IMR-90 (cell line): ENCODE measurements at regions of chr14 and their contacts with region 1.

Region 1: DNA sequence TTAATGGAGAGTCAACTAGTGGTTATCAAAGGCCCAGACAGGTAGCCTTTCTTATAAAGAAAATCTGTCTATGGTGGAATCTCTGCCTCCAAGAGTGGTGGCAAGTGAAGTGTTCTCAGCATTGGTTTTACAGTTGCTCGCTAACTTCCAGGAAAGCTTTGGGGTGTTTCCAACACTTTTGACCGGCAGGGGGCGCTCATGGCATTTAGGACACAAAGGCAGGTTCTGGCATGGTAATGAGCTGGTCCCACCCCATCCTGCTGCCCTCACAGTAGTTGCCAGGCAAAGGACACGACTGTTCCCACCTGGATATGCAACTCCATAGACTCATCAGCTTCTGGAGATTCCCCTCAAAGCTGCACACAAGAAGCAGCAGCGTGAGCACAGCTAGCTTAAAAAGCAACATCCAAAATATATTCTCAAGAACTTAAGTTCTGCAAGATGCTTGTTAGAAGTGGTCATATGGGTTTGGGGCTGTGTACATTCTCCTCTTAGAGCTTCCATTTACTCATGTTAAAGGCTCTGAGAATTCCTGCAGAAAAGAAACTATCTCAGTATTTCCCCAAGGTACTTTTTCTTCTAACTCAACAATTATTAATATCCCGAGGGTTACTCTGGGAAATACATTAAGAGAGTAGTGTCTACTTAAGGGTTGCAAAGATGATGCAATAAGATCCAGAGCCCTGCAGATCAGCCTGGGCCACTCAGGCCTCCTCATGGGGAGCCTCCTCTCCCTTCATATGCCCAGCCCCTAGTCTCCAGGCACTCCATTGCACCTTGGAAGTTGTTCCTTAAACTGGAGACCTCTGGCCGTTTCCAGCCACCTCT is 14.8 kb downstream of the PROX2 start:
- DNase-seq: peak; percentile 80
- ATAC-seq: peak; percentile 89
- H3K4me3 ChIP-seq: no peak overlapping the region
- H3K27ac ChIP-seq: no peak overlapping the region
- H3K4me1 ChIP-seq: peaks cover 2% of the 10 kb centered on the region; the same call in 1 of the 2 replicates
- H3K27me3 ChIP-seq: 0 out of 2 replicates have a peak, but pooled peaks cover under 1% of the 10 kb centered on the region
- CTCF ChIP-seq: peak; percentile 89
- POLR2A ChIP-seq: no peak
- RAD21 ChIP-seq: peak; percentile 84

Region 2: DNA sequence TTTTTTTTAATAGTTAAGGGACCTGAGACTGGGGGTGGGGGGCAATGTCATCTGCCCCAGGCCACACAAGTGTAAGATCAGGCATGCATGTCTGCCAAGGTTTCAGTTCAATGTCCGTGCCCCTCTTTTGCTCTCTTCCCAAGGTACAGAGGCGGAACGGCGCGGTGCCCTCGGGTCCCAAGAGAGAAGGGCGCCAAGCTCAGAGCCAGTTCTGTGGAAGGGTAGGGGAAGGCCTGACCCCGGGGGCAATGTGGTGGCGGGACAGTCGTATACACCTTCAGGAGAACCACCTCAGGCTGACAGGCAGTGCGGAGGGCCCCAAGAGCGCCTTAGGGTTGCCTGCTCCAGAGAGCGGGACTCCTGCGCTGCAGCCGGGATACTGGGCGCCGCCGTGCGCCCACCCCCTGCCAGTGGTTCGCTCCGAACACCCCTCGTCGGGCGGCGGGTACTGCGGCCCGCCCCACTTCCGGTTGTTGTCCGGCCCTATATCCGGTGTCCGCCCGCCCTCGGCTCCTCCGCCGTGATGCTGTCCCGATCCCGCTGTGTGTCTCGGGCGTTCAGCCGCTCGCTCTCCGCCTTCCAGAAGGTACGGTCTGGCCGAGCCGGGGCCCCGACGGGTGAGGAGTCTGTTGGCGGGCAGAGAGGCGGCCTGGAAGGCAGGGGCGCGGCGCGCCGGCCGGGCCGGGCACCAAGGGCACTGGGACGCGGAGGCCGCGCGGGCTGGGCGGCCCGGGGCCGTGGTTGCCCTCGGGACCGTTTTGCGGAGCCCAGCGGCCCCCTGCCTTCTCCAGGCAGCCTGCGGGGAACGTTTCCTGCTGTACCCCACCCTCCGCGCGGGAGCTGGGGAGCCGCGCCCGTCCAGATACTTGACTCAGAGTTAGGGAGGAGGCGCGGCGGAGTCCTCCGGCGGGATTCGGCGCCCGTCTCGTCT is 20.6 kb after region 1 on chr14 and contains the start of gene DLST:
- CTCF ChIA-PET with region 1: interaction called, 10 read pairs
- POLR2A ChIA-PET with region 1: no interaction called
- dilution Hi-C with region 1: no loop called
- in situ Hi-C with region 1: no loop called
- intact Hi-C with region 1: no loop called
- DNase-seq: peak; percentile 84
- ATAC-seq: peak; percentile 87
- H3K4me3 ChIP-seq: peak within 1 kb of the TSS; percentile 94
- H3K27ac ChIP-seq: peak within 1 kb of the TSS; percentile 89
- H3K4me1 ChIP-seq: peaks cover 22% of the 10 kb centered on the region
- H3K27me3 ChIP-seq: no peaks in the 10 kb centered on the region
- CTCF ChIP-seq: no peak
- POLR2A ChIP-seq: peak; percentile 93
- RAD21 ChIP-seq: no peak
- total RNA-seq, gene DLST: 58.6 and 63.0 TPM in 2 replicates

Region 3: GRCh38 chr14:74905375-74906142 is 44.4 kb after region 1 on chr14:
- CTCF ChIA-PET with region 1: interaction called, 46 read pairs
- POLR2A ChIA-PET with region 1: interaction called, 3 read pairs
- dilution Hi-C with region 1: no loop called
- in situ Hi-C with region 1: loop called (anchors 5 kb)
- intact Hi-C with region 1: loop called (anchors 1 kb)
- DNase-seq: peak; percentile 34
- ATAC-seq: peak; percentile 76
- H3K4me3 ChIP-seq: no peak overlapping the region
- H3K27ac ChIP-seq: no peak overlapping the region
- H3K4me1 ChIP-seq: no peaks in the 10 kb centered on the region; the same call in 1 of the 2 replicates
- H3K27me3 ChIP-seq: no peaks in the 10 kb centered on the region
- CTCF ChIP-seq: peak; percentile 86
- POLR2A ChIP-seq: no peak
- RAD21 ChIP-seq: peak; percentile 67

Region 4: GRCh38 chr14:75088574-75089373 is 227.7 kb after region 1 on chr14:
- CTCF ChIA-PET with region 1: interaction called, 5 read pairs
- POLR2A ChIA-PET with region 1: no interaction called
- dilution Hi-C with region 1: no loop called
- in situ Hi-C with region 1: no loop called
- intact Hi-C with region 1: loop called (anchors 2 kb)
- DNase-seq: peak; percentile 65
- ATAC-seq: peak; percentile 79
- H3K4me3 ChIP-seq: no peak overlapping the region
- H3K27ac ChIP-seq: no peak overlapping the region
- H3K4me1 ChIP-seq: 0 out of 2 replicates have a peak, but pooled peaks cover 3% of the 10 kb centered on the region
- H3K27me3 ChIP-seq: no peaks in the 10 kb centered on the region
- CTCF ChIP-seq: peak; percentile 94
- POLR2A ChIP-seq: peak; percentile 56; the same call in 1 of the 2 replicates
- RAD21 ChIP-seq: peak; percentile 95